Endothelial cell of umbilical vein (primary cell): ENCODE measurements at regions of chr15 and their contacts with region 1.

Region 1: DNA sequence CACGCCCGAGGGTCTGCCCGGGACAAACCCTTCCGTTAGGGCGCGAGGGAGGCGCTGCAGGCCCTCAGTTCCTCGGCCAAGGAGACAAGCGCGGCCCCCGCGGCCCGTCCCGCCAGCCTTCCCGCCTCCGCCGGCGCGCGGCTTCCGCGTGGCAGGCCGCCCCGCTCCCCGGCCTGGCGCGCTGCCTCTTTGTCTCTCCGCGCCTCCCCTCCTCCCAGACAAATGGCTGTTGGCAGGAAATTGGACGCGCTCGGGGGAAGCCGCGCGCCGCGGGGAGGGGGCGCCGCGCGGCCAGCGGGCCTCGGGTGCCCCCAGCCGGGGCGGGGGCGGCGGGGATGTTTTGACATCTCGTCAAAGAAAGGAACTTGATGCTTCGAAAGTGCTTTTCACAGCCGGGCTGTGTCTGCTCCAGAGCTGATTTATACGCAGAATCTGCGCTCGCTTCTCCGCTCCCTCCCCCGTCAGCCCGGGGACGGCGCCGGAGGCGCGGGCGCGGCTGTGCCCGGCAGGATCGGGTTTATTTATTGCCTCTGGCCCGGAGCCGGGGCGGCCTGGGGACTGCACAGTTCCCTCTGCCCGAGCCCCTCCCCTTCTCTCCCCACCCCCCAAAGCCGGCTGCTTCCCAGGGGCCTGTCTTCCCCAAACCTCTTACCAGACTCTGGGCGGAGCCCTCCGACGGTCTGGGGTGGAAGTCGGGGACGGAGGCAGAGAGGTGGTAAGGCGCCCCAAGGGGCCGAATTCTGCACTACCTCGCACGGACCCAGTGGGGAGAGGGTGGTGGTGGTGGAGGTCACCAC is 20.7 kb downstream of the SHF start:
- DNase-seq: peak; percentile 72
- H3K4me3 ChIP-seq: peak overlapping the region; percentile 54 to 76 (median 61)
- H3K27ac ChIP-seq: peak overlapping the region; percentile 79
- H3K4me1 ChIP-seq: peaks cover 3% of the 10 kb centered on the region
- H3K27me3 ChIP-seq: no peaks in the 10 kb centered on the region
- CTCF ChIP-seq: peak; percentile 52 to 74
- POLR2A ChIP-seq: no peak

Region 2: GRCh38 chr15:44489464-44489863 is 677.6 kb before region 1 on chr15:
- CTCF ChIA-PET with region 1: no interaction called
- POLR2A ChIA-PET with region 1: no interaction called
- dilution Hi-C with region 1: no loop called
- intact Hi-C with region 1: no loop called
- DNase-seq: peak; percentile 77
- H3K4me3 ChIP-seq: no peak overlapping the region
- H3K27ac ChIP-seq: peak overlapping the region; percentile 4
- H3K4me1 ChIP-seq: peaks cover 12% of the 10 kb centered on the region
- H3K27me3 ChIP-seq: no peaks in the 10 kb centered on the region
- CTCF ChIP-seq: no peak
- POLR2A ChIP-seq: no peak

Region 3: GRCh38 chr15:44918136-44918535 is 248.9 kb before region 1 on chr15:
- CTCF ChIA-PET with region 1: no interaction called
- POLR2A ChIA-PET with region 1: no interaction called
- dilution Hi-C with region 1: no loop called
- intact Hi-C with region 1: no loop called
- DNase-seq: no peak
- H3K4me3 ChIP-seq: no peak overlapping the region
- H3K27ac ChIP-seq: no peak overlapping the region
- H3K4me1 ChIP-seq: no peaks in the 10 kb centered on the region
- H3K27me3 ChIP-seq: no peaks in the 10 kb centered on the region
- CTCF ChIP-seq: no peak
- POLR2A ChIP-seq: no peak

Region 4: DNA sequence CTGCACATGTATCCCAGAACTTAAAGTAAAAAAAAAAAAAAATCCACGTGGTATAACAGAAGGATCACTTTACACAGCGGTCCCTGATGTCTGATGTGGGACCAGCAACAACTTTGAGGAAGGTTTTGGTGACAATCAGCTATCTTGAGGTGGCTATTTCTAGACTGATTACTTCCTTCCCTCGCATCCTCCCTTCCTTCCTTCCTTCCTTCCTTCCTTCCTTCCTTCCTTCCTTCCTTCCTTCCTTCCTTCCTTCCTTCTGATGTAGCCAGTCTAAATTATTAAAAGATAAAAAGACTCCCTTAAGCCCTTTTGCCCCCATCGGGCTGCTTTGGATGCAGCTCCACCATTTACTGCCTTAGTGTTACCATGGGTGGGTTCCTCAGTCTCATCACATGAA is 129.1 kb before region 1 on chr15:
- CTCF ChIA-PET with region 1: no interaction called
- POLR2A ChIA-PET with region 1: no interaction called
- dilution Hi-C with region 1: no loop called
- intact Hi-C with region 1: no loop called
- DNase-seq: no peak
- H3K4me3 ChIP-seq: no peak overlapping the region
- H3K27ac ChIP-seq: no peak overlapping the region
- H3K4me1 ChIP-seq: peaks cover 5% of the 10 kb centered on the region
- H3K27me3 ChIP-seq: no peaks in the 10 kb centered on the region
- CTCF ChIP-seq: no peak
- POLR2A ChIP-seq: no peak

Region 5: GRCh38 chr15:45083223-45083622 is 83.8 kb before region 1 on chr15:
- CTCF ChIA-PET with region 1: no interaction called
- POLR2A ChIA-PET with region 1: no interaction called
- dilution Hi-C with region 1: no loop called
- intact Hi-C with region 1: no loop called
- DNase-seq: no peak
- H3K4me3 ChIP-seq: no peak overlapping the region
- H3K27ac ChIP-seq: no peak overlapping the region
- H3K4me1 ChIP-seq: no peaks in the 10 kb centered on the region
- H3K27me3 ChIP-seq: peaks cover 23 to 26% of the 10 kb centered on the region in 2 experiments
- CTCF ChIP-seq: no peak
- POLR2A ChIP-seq: no peak

Region 6: GRCh38 chr15:45146405-45146804 is 20.6 kb before region 1 on chr15:
- CTCF ChIA-PET with region 1: interaction called, 11 read pairs
- POLR2A ChIA-PET with region 1: interaction called, 3 read pairs
- dilution Hi-C with region 1: no loop called
- intact Hi-C with region 1: no loop called
- DNase-seq: no peak
- H3K4me3 ChIP-seq: no peak overlapping the region
- H3K27ac ChIP-seq: no peak overlapping the region
- H3K4me1 ChIP-seq: no peaks in the 10 kb centered on the region
- H3K27me3 ChIP-seq: no peaks in the 10 kb centered on the region
- CTCF ChIP-seq: no peak
- POLR2A ChIP-seq: no peak

Region 7: GRCh38 chr15:45198337-45199135 is 31.5 kb after region 1 on chr15:
- CTCF ChIA-PET with region 1: interaction called, 98 read pairs
- POLR2A ChIA-PET with region 1: interaction called, 4 read pairs
- dilution Hi-C with region 1: no loop called
- intact Hi-C with region 1: loop called (anchors 1 kb)
- DNase-seq: peak; percentile 99
- H3K4me3 ChIP-seq: peak overlapping the region; percentile 56 to 82 (median 68)
- H3K27ac ChIP-seq: peak overlapping the region; percentile 43
- H3K4me1 ChIP-seq: peaks cover 8% of the 10 kb centered on the region
- H3K27me3 ChIP-seq: peaks cover 7% of the 10 kb centered on the region in 2 experiments
- CTCF ChIP-seq: peak; percentile 83 to 84
- POLR2A ChIP-seq: peak; percentile 83

Region 8: GRCh38 chr15:45378149-45378912 is 211.3 kb after region 1 on chr15 and contains the start of gene GATM:
- CTCF ChIA-PET with region 1: interaction called, 15 read pairs
- POLR2A ChIA-PET with region 1: no interaction called
- dilution Hi-C with region 1: no loop called
- intact Hi-C with region 1: no loop called
- DNase-seq: peak; percentile 82
- H3K4me3 ChIP-seq: peak within 1 kb of the TSS; percentile 24 to 40 (median 35)
- H3K27ac ChIP-seq: no peak within 1 kb of the TSS
- H3K4me1 ChIP-seq: peaks cover 13% of the 10 kb centered on the region
- H3K27me3 ChIP-seq: peaks cover 41 to 63% of the 10 kb centered on the region in 2 experiments
- CTCF ChIP-seq: peak; percentile 29 to 64
- POLR2A ChIP-seq: no peak
- total RNA-seq, gene GATM: 0.48 and 0.60 TPM in 2 replicates

Region 9: DNA sequence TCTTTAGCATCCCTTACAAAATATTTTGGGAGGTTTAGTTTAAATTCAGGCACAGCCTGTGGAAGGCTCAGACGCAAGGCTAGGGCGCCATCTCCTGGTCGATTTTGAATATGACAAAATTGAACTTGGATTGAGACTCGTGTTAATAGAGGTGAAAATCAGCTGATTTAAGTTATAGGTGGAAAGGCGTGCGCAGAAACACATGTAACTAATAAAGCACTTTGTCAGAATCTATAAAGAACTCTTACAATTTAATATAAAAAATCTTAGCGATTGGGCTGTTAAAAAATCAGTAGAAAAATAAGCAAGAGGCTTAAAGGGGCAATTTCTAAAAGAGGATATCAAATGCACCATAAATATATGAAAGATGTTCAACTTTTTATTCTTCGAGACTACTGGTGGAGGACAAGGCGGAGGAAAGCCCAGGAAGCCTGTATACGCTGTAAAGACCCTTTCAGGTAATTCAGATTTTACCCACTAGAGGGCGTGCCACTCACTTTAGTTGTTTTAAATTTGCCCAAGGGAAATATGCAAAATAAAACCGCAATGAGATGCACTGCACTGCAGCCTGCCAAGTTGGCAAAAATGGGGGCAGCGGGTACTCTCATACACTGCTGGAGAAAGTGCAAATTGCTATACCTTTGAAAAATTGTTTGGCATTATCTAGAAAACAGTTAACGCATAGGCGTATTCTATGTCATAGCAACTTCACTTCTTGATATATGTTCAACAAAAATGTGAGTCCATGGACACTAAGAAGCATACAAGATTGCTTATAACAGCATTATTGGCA is 290.8 kb after region 1 on chr15:
- CTCF ChIA-PET with region 1: interaction called, 50 read pairs
- POLR2A ChIA-PET with region 1: no interaction called
- dilution Hi-C with region 1: no loop called
- intact Hi-C with region 1: loop called (anchors 1 kb)
- DNase-seq: peak; percentile 86
- H3K4me3 ChIP-seq: peak overlapping the region; percentile 36 to 65 (median 44)
- H3K27ac ChIP-seq: peak overlapping the region; percentile 58
- H3K4me1 ChIP-seq: peaks cover 12% of the 10 kb centered on the region
- H3K27me3 ChIP-seq: no peaks in the 10 kb centered on the region
- CTCF ChIP-seq: peak; percentile 45 to 63
- POLR2A ChIP-seq: no peak